SK-N-SH (cell line): ENCODE measurements at regions of chr6 and their contacts with region 1.

Region 1: GRCh38 chr6:42890311-42891198 is 11.1 kb downstream of the RPL7L1 start:
- DNase-seq: peak; percentile 96
- H3K4me3 ChIP-seq: peak overlapping the region; percentile 82 to 84
- H3K27ac ChIP-seq: peak overlapping the region; percentile 97 to 99
- H3K4me1 ChIP-seq: peaks cover 5 to 6% of the 10 kb centered on the region in 2 experiments; a peak in 2 of 4 replicates
- H3K27me3 ChIP-seq: no peaks in the 10 kb centered on the region
- CTCF ChIP-seq: no peak
- EP300 ChIP-seq: no peak; a peak in 1 of 4 replicates
- RAD21 ChIP-seq: no peak

Region 2: GRCh38 chr6:42879372-42880239 is 10.9 kb before region 1 on chr6 and contains the start of gene RPL7L1:
- CTCF ChIA-PET with region 1: interaction called, 3 read pairs
- POLR2A ChIA-PET with region 1: interaction called, 18 read pairs
- DNase-seq: peak; percentile 75
- H3K4me3 ChIP-seq: peak within 1 kb of the TSS; percentile 74 to 87
- H3K27ac ChIP-seq: peak within 1 kb of the TSS; percentile 89 to 94
- H3K4me1 ChIP-seq: peaks cover 0 to 3% of the 10 kb centered on the region in 2 experiments; a peak in 1 of 4 replicates
- H3K27me3 ChIP-seq: no peaks in the 10 kb centered on the region
- CTCF ChIP-seq: no peak
- EP300 ChIP-seq: peak in 1 of 2 experiments; percentile 7; a peak in 1 of 4 replicates
- RAD21 ChIP-seq: no peak
- polyA plus RNA-seq, gene RPL7L1: 22.1 and 28.7 TPM in 2 replicates

Region 3: GRCh38 chr6:42901536-42901957 is 11.0 kb after region 1 on chr6:
- CTCF ChIA-PET with region 1: interaction called, 11 read pairs
- POLR2A ChIA-PET with region 1: no interaction called
- DNase-seq: peak; percentile 72
- H3K4me3 ChIP-seq: peak overlapping the region in 1 of 2 experiments; percentile 20; a peak in 1 of 4 replicates
- H3K27ac ChIP-seq: no peak overlapping the region
- H3K4me1 ChIP-seq: peaks cover 0 to 9% of the 10 kb centered on the region in 2 experiments; a peak in 2 of 4 replicates
- H3K27me3 ChIP-seq: no peaks in the 10 kb centered on the region
- CTCF ChIP-seq: peak; percentile 89
- EP300 ChIP-seq: no peak
- RAD21 ChIP-seq: peak; percentile 97

Region 4: GRCh38 chr6:42928986-42929820 is 38.6 kb after region 1 on chr6 and contains the start of gene CNPY3:
- CTCF ChIA-PET with region 1: no interaction called
- POLR2A ChIA-PET with region 1: no interaction called
- DNase-seq: peak; percentile 92
- H3K4me3 ChIP-seq: peak within 1 kb of the TSS; percentile 71 to 78
- H3K27ac ChIP-seq: peak within 1 kb of the TSS; percentile 92 to 93
- H3K4me1 ChIP-seq: peaks cover 0 to 15% of the 10 kb centered on the region in 2 experiments; a peak in 1 of 4 replicates
- H3K27me3 ChIP-seq: no peaks in the 10 kb centered on the region
- CTCF ChIP-seq: no peak
- EP300 ChIP-seq: no peak
- RAD21 ChIP-seq: no peak
- polyA plus RNA-seq, gene CNPY3: 59.2 and 77.5 TPM in 2 replicates

Region 5: DNA sequence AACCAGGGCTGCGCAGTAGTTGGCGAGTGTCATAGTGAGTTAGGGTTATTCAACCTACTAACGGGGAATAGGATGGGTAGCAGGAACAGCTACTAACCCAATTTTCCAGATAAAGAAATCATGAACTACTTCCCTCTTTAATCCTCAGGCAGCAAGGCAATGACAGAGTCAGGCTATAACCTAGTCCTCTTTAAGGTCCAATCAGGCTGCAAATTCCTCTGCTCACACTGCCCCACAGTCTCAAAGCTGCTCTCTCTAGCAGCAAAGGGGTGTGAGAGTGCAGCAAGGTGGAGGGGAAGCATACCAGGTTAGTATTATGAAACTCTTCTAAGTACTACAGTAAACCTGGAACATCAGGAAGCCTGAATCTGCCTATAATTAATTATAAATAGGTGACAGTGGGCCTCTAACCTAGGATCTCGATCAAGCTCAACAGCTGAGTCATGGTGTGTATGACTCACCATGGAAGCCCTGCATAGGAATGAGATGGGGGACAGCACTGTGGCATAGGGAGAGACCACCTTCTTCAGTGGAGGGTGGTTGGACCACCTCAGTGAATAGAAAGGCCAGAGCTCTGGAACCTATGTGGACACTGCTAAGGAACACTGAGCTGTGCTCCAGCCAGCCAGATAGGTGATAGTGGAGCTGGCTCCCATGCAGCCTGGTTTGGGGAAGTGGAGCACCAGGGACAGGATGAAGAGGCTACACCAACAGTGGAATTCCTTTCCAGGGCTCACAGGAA is 80.5 kb after region 1 on chr6:
- CTCF ChIA-PET with region 1: no interaction called
- POLR2A ChIA-PET with region 1: no interaction called
- DNase-seq: no peak
- H3K4me3 ChIP-seq: no peak overlapping the region
- H3K27ac ChIP-seq: peak overlapping the region in 1 of 2 experiments; percentile 44; a peak in 2 of 4 replicates
- H3K4me1 ChIP-seq: peaks cover 0 to 9% of the 10 kb centered on the region in 2 experiments; a peak in 3 of 4 replicates
- H3K27me3 ChIP-seq: no peaks in the 10 kb centered on the region
- CTCF ChIP-seq: no peak
- EP300 ChIP-seq: no peak
- RAD21 ChIP-seq: no peak